H1 (cell line): ENCODE measurements at regions of chr20 and their contacts with region 1.

Region 1: GRCh38 chr20:31572701-31573554 is 32.2 kb upstream of the ID1 start:
- DNase-seq: peak; percentile 88 to 92
- H3K4me3 ChIP-seq: peak overlapping the region; percentile 34 to 54 (median 45)
- H3K27ac ChIP-seq: peak overlapping the region; percentile 86
- H3K4me1 ChIP-seq: peaks cover 13 to 36% (median 27%) of the 10 kb centered on the region in 4 experiments
- H3K27me3 ChIP-seq: no peaks in the 10 kb centered on the region
- CTCF ChIP-seq: 0 out of 4 replicates have a peak, but pooled peaks of 1 of the 3 experiments have one; percentile 19
- EP300 ChIP-seq: peak; percentile 3 to 94
- POLR2A ChIP-seq: peak; percentile 98
- RAD21 ChIP-seq: peak in 1 of 2 experiments; percentile 28; a peak in 2 of 4 replicates

Region 2: GRCh38 chr20:31587545-31588389 is 14.8 kb after region 1 on chr20:
- CTCF ChIA-PET with region 1: interaction called, 67 read pairs
- POLR2A ChIA-PET with region 1: interaction called, 96 read pairs
- DNase-seq: no peak
- H3K4me3 ChIP-seq: peak overlapping the region; percentile 12 to 56 (median 34); a peak in 7 of 8 replicates
- H3K27ac ChIP-seq: no peak overlapping the region
- H3K4me1 ChIP-seq: peaks cover 8 to 31% (median 25%) of the 10 kb centered on the region in 4 experiments
- H3K27me3 ChIP-seq: peaks cover 0 to 15% (median 7%) of the 10 kb centered on the region in 4 experiments; a peak in 5 of 7 replicates
- CTCF ChIP-seq: no peak
- EP300 ChIP-seq: no peak
- POLR2A ChIP-seq: no peak; a peak in 1 of 3 replicates
- RAD21 ChIP-seq: no peak

Region 3: DNA sequence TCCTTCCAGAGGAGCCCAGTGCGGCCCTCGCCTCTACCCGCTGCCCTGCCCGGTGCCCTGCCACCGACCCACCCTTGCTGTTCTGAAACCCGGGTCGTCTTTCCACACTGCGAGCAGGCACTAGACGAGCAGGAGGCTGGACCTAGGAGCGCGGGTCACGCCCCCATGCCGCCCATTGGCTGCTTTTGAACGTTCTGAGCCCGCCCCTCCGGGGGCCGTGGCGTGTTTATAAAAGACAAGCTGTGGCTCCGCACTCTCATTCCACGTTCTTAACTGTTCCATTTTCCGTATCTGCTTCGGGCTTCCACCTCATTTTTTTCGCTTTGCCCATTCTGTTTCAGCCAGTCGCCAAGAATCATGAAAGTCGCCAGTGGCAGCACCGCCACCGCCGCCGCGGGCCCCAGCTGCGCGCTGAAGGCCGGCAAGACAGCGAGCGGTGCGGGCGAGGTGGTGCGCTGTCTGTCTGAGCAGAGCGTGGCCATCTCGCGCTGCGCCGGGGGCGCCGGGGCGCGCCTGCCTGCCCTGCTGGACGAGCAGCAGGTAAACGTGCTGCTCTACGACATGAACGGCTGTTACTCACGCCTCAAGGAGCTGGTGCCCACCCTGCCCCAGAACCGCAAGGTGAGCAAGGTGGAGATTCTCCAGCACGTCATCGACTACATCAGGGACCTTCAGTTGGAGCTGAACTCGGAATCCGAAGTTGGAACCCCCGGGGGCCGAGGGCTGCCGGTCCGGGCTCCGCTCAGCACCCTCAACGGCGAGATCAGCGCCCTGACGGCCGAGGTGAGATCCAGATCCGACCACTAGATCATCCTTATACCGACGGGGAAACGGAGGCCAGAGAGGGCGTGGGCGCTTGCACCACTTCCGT is 32.3 kb after region 1 on chr20 and contains the start of gene ID1:
- CTCF ChIA-PET with region 1: interaction called, 1,559 read pairs
- POLR2A ChIA-PET with region 1: interaction called, 1,033 read pairs
- DNase-seq: peak; percentile 84 to 93
- H3K4me3 ChIP-seq: peak within 1 kb of the TSS; percentile 72 to 99 (median 88)
- H3K27ac ChIP-seq: peak within 1 kb of the TSS; percentile 64
- H3K4me1 ChIP-seq: peaks cover 19 to 36% (median 26%) of the 10 kb centered on the region in 4 experiments
- H3K27me3 ChIP-seq: peaks cover 0 to 4% (median 0%) of the 10 kb centered on the region in 4 experiments; a peak in 2 of 7 replicates
- CTCF ChIP-seq: no peak
- EP300 ChIP-seq: no peak
- POLR2A ChIP-seq: peak; percentile 81 to 96
- RAD21 ChIP-seq: no peak
- total RNA-seq, gene ID1: 120 and 131 TPM in 2 replicates

Region 4: GRCh38 chr20:31638317-31638716 is 65.4 kb after region 1 on chr20:
- CTCF ChIA-PET with region 1: interaction called, 40 read pairs
- POLR2A ChIA-PET with region 1: interaction called, 5 read pairs
- DNase-seq: no peak
- H3K4me3 ChIP-seq: no peak overlapping the region
- H3K27ac ChIP-seq: no peak overlapping the region
- H3K4me1 ChIP-seq: peaks cover 0 to 2% (median 0%) of the 10 kb centered on the region in 4 experiments; a peak in 2 of 7 replicates
- H3K27me3 ChIP-seq: no peaks in the 10 kb centered on the region
- CTCF ChIP-seq: no peak
- EP300 ChIP-seq: no peak
- POLR2A ChIP-seq: no peak
- RAD21 ChIP-seq: no peak